ENCODE measurements at regions of chr2 and their contacts with region 1.

Region 1: GRCh38 chr2:210663631-210664089 is 107.3 kb downstream of the CPS1 start:
- DNase-seq: no peak
- ATAC-seq: peak; percentile 38 to 82

Region 2: GRCh38 chr2:211035548-211036185 is 372.0 kb after region 1 on chr2:
- intact Hi-C with region 1: loop called in 1 of 2 experiments (anchors 2 kb)
- DNase-seq: no peak
- ATAC-seq: no peak

Region 3: DNA sequence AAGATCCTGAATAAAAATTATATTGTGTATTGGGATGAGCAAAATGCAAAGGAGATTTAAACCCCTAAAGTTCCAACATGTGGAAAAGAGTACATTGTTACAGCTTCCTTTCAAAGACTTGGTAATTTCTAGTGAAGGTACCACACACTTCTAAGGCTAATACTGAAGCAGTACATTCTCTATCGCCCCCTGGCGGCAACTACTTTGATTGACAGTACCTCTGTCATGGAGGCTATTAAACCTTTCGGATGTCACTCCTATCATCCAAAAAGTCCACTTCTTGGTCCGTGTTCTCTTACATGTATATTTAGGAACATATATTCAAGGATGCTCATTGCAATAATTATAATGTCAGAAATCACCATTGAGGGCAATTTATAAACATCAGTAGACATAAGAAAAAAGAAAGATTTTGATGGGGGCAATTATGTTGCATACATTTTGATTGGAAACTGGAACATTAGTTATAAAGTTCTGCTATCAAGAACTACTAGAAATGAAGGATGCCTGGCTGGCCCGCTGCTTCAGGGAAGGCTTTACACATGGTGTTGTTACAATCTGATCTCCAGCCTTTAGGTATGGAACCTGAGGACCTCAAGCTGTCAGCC is 494.3 kb after region 1 on chr2:
- intact Hi-C with region 1: loop called in 1 of 2 experiments (anchors 5 kb)
- DNase-seq: peak; percentile 79
- ATAC-seq: peak; percentile 76

Measured in left cardiac atrium (tissue), 4 donors.